Naive thymus-derived CD4-positive, alpha-beta T cell (primary cell): ENCODE measurements at regions of chr7 and their contacts with region 1.

Region 1: GRCh38 chr7:155298834-155299534 is 1.3 kb downstream of the INSIG1 start:
- DNase-seq: peak; percentile 86 to 98 (median 98)
- ATAC-seq: peak; percentile 81
- H3K4me3 ChIP-seq: peak overlapping the region; percentile 73
- H3K4me3 Mint-ChIP-seq: peak overlapping the region; percentile 88 to 97 (median 93)
- H3K27ac ChIP-seq: peak overlapping the region; percentile 78
- H3K27ac Mint-ChIP-seq: peak overlapping the region; percentile 91 to 99 (median 97)
- H3K4me1 ChIP-seq: peaks cover 22 to 37% of the 10 kb centered on the region in 2 donors
- H3K4me1 Mint-ChIP-seq: peaks cover 23 to 62% (median 42%) of the 10 kb centered on the region in 7 donors
- H3K27me3 ChIP-seq: no peaks in the 10 kb centered on the region
- H3K27me3 Mint-ChIP-seq: peaks cover 0 to 3% (median 0%) of the 10 kb centered on the region in 5 donors

Region 2: GRCh38 chr7:155003376-155004214 is 295.4 kb before region 1 on chr7:
- CTCF ChIA-PET with region 1: no interaction called
- POLR2A ChIA-PET with region 1: interaction called, 10 read pairs
- intact Hi-C with region 1: loop called (anchors 1 kb)
- DNase-seq: peak in 8 of 9 donors; percentile 74 to 93 (median 86)
- ATAC-seq: peak; percentile 93
- H3K4me3 ChIP-seq: peak overlapping the region; percentile 68
- H3K4me3 Mint-ChIP-seq: peak overlapping the region; percentile 91 to 98 (median 94)
- H3K27ac ChIP-seq: peak overlapping the region; percentile 93
- H3K27ac Mint-ChIP-seq: peak overlapping the region; percentile 89 to 96 (median 94)
- H3K4me1 ChIP-seq: peaks cover 0 to 6% of the 10 kb centered on the region in 2 donors
- H3K4me1 Mint-ChIP-seq: peaks cover 12 to 25% (median 16%) of the 10 kb centered on the region in 7 donors
- H3K27me3 ChIP-seq: no peaks in the 10 kb centered on the region
- H3K27me3 Mint-ChIP-seq: no peaks in the 10 kb centered on the region

Region 3: GRCh38 chr7:155115288-155115687 is 183.7 kb before region 1 on chr7:
- CTCF ChIA-PET with region 1: no interaction called
- POLR2A ChIA-PET with region 1: no interaction called
- intact Hi-C with region 1: no loop called
- DNase-seq: no peak
- ATAC-seq: no peak
- H3K4me3 ChIP-seq: no peak overlapping the region
- H3K4me3 Mint-ChIP-seq: no peak overlapping the region
- H3K27ac ChIP-seq: no peak overlapping the region
- H3K27ac Mint-ChIP-seq: no peak overlapping the region
- H3K4me1 ChIP-seq: no peaks in the 10 kb centered on the region
- H3K4me1 Mint-ChIP-seq: no peaks in the 10 kb centered on the region
- H3K27me3 ChIP-seq: peaks cover 0 to 5% of the 10 kb centered on the region in 2 donors
- H3K27me3 Mint-ChIP-seq: peaks cover 16 to 49% (median 34%) of the 10 kb centered on the region in 5 donors

Region 4: DNA sequence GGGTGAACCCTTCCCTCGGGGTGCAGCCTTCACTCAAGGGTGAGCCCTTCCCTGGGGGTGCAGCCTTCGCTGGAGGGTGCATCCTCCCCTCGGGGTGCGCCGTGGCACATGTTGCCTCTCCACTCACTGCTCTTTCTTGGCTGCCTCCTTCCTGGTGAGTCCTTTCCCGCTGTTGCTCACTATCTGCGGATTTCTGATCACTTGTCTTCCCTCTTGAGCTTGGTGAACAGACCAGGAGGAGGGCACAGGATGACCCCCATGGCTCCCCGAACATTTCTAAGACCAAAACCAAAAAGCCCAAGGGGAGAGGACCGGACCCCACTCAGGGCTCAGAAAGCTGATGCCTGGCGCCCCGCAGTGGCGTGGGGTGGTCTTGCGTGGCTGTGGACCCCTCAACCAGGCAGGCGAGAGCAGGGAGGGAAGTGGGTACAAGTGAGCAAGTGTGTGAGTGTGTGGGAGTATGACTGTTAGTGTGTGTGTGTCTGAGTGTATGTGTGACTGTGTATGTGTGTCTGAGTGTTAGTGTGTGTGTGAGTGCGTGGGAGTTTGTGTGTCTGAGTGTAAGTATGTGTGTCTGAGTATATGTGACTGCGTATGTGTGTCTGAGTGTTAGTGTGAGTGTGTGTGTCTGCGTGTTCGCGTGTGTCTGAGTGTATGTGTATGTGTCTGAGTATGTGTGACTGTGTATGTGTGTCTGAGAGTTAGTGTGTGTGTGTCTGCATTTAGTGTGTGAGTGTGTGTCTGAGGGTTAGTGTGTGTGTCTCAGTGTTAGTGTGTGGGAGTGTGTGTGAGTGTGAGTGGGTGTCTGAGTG is 35.4 kb before region 1 on chr7:
- CTCF ChIA-PET with region 1: no interaction called
- POLR2A ChIA-PET with region 1: interaction called, 3 read pairs
- intact Hi-C with region 1: loop called in 1 of 2 experiments (anchors 5 kb)
- DNase-seq: no peak
- ATAC-seq: peak; percentile 4
- H3K4me3 ChIP-seq: no peak overlapping the region
- H3K4me3 Mint-ChIP-seq: no peak overlapping the region
- H3K27ac ChIP-seq: no peak overlapping the region
- H3K27ac Mint-ChIP-seq: no peak overlapping the region
- H3K4me1 ChIP-seq: no peaks in the 10 kb centered on the region
- H3K4me1 Mint-ChIP-seq: peaks cover 0 to 2% (median 0%) of the 10 kb centered on the region in 7 donors
- H3K27me3 ChIP-seq: no peaks in the 10 kb centered on the region
- H3K27me3 Mint-ChIP-seq: peaks cover 0 to 3% (median 0%) of the 10 kb centered on the region in 5 donors

Region 5: DNA sequence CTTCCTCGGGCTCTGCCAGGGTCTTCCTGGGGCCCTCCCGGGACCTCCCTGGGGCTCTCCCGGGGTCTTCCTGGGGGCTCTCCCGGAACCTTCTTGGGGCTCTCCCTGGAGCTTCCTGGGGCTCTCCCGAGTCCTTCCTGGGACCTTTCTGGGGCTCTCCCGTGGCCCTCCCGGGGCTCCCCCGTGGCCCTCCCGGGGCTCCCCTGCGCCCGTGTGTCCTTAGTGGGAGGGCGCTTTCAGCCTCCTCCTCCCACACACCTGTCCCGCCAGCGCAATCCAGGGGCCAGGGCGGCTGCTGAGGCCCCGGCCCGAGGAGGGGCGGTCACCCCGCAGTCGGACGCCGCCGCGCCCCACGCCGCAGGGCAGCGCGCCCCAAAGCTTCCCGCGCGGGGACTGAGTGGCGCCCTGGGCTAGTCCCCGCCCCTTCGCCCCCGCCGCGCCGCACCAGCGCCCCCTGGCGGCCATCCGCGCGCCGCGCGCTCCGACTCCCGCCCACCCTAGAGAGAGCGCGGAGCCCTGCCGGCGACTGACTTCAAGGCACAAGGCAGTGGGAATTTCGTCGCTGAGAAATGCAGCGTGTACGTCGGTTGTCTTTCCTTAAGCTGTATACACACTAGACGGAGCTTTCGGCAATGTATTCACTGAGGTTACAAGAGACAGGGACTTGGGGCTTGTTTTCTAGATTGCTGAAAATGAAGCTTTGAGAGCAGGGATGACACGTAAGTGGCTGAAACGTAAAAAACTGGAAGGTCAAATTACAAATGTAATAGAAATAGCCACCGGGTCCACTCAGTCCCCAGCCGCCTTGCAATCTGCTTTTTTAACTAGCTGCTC is 45.8 kb after region 1 on chr7:
- CTCF ChIA-PET with region 1: interaction called, 9 read pairs
- POLR2A ChIA-PET with region 1: interaction called, 6 read pairs
- intact Hi-C with region 1: loop called (anchors 1 kb)
- DNase-seq: peak; percentile 65 to 93 (median 82)
- ATAC-seq: peak; percentile 99
- H3K4me3 ChIP-seq: peak overlapping the region; percentile 35
- H3K4me3 Mint-ChIP-seq: peak overlapping the region in 9 of 10 donors; percentile 47 to 83 (median 69)
- H3K27ac ChIP-seq: no peak overlapping the region
- H3K27ac Mint-ChIP-seq: peak overlapping the region in 1 of 9 donors; percentile 52
- H3K4me1 ChIP-seq: peaks cover 4 to 9% of the 10 kb centered on the region in 2 donors
- H3K4me1 Mint-ChIP-seq: peaks cover 3 to 12% (median 5%) of the 10 kb centered on the region in 7 donors
- H3K27me3 ChIP-seq: peaks cover 0 to 2% of the 10 kb centered on the region in 2 donors
- H3K27me3 Mint-ChIP-seq: peaks cover 0 to 34% (median 7%) of the 10 kb centered on the region in 5 donors

Region 6: GRCh38 chr7:155763691-155764437 is 464.9 kb after region 1 on chr7:
- CTCF ChIA-PET with region 1: no interaction called
- POLR2A ChIA-PET with region 1: no interaction called
- intact Hi-C with region 1: loop called (anchors 2 kb)
- DNase-seq: peak in 8 of 9 donors; percentile 48 to 73 (median 60)
- ATAC-seq: peak; percentile 80
- H3K4me3 ChIP-seq: peak overlapping the region; percentile 12
- H3K4me3 Mint-ChIP-seq: peak overlapping the region; percentile 64 to 91 (median 80)
- H3K27ac ChIP-seq: peak overlapping the region; percentile 67
- H3K27ac Mint-ChIP-seq: peak overlapping the region; percentile 73 to 98 (median 91)
- H3K4me1 ChIP-seq: peaks cover 24 to 31% of the 10 kb centered on the region in 2 donors
- H3K4me1 Mint-ChIP-seq: peaks cover 39 to 67% (median 61%) of the 10 kb centered on the region in 7 donors
- H3K27me3 ChIP-seq: no peaks in the 10 kb centered on the region
- H3K27me3 Mint-ChIP-seq: no peaks in the 10 kb centered on the region